Cardiac septum (tissue), 1 donor: ENCODE measurements at regions of chr1 and their contacts with region 1.

Region 1: DNA sequence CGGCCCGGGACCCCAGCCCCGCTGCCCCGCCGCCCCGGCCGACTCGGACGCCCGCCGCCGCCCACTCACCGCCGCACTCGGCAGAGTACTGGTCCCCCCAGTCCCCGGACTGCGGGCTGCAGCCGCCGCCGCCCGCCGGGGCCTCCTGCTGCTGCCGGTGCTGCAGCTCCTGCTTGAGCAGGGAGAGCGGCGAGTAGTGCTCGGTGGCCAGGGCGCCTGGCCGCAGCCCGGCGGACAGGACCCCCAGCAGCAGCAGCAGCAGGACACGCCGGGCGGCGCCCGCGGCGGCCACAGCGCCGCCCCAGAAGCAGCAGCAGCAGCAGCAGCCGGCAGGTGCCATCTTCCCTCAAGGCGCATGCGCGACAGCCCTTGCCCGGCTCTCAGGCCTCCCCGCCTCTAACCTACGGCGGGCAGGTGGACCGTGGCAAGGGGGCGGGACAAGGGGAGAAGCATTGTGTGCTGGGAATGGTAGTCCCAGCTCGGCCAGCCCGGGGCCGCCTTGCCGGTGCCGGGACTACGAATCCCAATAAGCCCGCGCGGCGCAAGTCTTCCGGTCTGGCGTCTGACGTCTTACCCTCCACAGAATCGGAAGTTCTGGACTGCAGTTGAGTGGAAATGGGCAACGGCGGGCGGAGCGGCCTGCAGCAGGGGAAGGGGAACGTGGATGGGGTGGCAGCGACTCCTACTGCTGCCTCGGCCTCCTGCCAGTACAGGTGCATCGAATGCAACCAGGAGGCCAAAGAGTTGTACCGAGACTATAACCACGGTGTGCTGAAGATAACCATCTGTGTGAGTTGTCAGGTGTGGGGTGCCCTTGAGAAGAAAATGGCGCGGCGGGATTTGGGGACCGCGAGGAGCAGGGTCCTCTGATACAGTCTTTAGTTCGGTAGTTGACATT is at the starts of genes ARV1 and TTC13:
- DNase-seq: peak; percentile 100
- total RNA-seq, gene ARV1: 20.7 TPM
- total RNA-seq, gene TTC13: 8.2 TPM

Region 2: GRCh38 chr1:230797942-230798418 is 180.8 kb before region 1 on chr1:
- intact Hi-C with region 1: loop called (anchors 2 kb)
- DNase-seq: no peak

Region 3: DNA sequence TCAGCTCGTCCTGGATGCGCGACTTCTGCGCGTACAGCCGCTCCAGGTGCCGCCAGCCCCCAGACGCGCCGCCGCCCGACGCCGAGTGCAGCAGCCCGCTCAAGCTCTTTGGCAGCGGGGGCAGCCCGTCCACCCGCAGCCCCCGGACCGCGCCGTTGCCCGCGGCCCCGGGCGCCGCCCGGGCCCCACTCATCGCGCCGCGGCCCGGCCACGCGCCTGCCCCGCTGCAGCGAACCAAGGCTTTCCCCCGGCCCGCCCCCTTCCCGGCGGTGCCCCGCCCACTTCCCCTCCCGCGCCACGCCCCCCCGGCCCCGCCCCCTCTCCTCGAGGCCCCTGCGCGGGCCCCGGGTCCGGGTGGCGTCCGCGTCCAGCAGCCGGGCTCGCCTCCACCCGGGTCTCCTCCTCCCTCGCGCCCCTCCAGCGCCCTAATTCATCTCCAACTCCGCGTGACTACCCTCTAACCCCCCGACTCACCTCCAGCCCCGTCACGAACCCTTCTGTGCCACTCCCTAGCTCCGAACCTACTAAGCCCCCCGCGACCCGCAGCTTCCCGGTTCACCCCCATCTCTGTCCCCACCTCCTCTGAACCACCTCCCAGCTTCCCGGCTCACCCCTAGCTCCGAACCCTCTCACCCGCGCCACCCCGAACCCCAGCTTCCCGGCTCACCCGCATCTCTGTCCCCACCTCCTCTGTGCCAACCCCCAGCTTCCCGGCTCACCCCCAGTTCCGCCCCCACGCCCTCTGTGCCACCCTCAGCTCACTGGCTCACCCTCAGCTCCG is 61.5 kb after region 1 on chr1 and contains the start of gene FAM89A:
- intact Hi-C with region 1: no loop called
- DNase-seq: no peak
- total RNA-seq, gene FAM89A: 4.1 TPM

Region 4: GRCh38 chr1:231899713-231900440 is 921.1 kb after region 1 on chr1:
- intact Hi-C with region 1: no loop called
- DNase-seq: no peak